Activated B cell treated with CpG ODN at 0.5 μM for 24 hours (primary cell): ENCODE measurements at regions of chr3 and their contacts with region 1.

Region 1: DNA sequence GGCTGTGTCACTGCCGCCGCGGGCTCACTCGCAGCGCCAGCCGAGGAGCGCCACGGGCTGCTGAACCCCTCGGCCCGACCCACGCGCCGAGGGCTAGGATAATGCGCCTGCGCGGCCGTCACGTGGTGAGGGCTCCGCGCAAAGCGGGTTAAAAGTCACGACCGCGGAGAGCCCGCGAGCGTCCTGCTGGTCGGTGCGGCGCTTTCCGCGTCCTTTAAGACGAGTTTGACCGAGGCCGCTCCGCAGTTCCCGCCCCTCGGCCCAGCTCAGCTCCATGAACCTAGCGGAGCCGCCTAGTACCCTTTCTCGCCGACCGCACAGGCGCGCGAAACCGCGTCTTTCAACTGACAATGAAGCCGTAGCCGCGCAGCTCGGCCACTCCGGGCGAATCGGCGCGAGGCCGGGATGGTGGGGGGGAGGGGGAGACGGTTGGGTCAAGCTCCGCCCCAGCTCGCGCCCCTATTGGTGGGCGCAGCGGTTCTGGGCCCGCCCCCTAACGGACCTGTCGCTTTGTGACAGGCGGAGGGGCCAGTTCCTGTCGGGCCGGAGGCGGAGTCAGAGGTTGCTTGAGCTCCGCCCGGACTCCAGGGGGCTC is 636 bp upstream of the STT3B start:
- DNase-seq: peak; percentile 97
- ATAC-seq: peak; percentile 84
- H3K4me3 Mint-ChIP-seq: peak overlapping the region; percentile 96
- H3K27ac Mint-ChIP-seq: peak overlapping the region; percentile 99
- H3K4me1 Mint-ChIP-seq: peaks cover 31% of the 10 kb centered on the region
- H3K27me3 Mint-ChIP-seq: no peaks in the 10 kb centered on the region
- CTCF ChIP-seq: no peak

Region 2: GRCh38 chr3:30658328-30659052 is 873.6 kb before region 1 on chr3:
- CTCF ChIA-PET with region 1: no interaction called
- POLR2A ChIA-PET with region 1: interaction called, 4 read pairs
- intact Hi-C with region 1: loop called (anchors 5 kb)
- DNase-seq: no peak
- ATAC-seq: peak; percentile 87
- H3K4me3 Mint-ChIP-seq: peak overlapping the region; percentile 12
- H3K27ac Mint-ChIP-seq: peak overlapping the region; percentile 82
- H3K4me1 Mint-ChIP-seq: peaks cover 94% of the 10 kb centered on the region
- H3K27me3 Mint-ChIP-seq: no peaks in the 10 kb centered on the region
- CTCF ChIP-seq: no peak

Region 3: DNA sequence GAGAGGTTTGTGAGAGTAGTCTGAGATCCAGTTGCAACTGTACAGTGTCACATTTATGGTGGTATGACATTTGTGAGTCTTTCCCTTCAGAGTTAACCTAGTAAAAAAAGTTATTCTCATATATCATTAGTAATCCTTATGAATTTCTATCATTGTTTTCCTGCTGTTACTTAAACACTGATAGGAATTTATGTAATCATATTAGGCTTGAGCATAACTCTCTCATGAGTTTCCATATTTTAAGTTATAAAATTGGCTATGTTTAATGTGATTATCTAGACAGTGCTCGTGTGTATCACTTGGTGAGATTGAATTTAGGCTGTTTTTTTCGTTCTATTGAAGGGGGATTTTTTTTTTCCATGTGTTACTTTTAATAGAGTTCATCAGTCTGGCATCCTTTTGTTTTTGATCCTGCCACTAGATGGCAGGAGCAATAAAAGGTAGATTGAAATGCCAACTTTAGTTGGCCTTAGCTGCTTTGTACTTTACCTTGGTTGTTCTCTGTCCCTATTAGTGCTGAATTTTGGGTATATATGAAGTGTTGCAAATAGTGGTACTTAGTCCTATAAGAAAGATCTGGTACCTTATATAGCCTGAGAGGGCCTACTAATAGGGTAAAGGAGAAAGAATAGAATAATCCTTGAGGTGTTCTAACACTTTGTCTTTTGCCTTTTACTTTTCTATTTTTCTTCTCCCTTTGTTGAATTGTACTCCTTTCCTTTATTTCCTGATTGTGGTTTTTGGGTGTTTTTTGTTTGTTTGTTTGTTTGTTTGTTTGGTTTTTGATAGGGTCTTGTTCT is 18.6 kb after region 1 on chr3:
- CTCF ChIA-PET with region 1: no interaction called
- POLR2A ChIA-PET with region 1: interaction called, 14 read pairs
- intact Hi-C with region 1: no loop called
- DNase-seq: no peak
- ATAC-seq: peak; percentile 49
- H3K4me3 Mint-ChIP-seq: no peak overlapping the region
- H3K27ac Mint-ChIP-seq: peak overlapping the region; percentile 13
- H3K4me1 Mint-ChIP-seq: peaks cover 63% of the 10 kb centered on the region
- H3K27me3 Mint-ChIP-seq: no peaks in the 10 kb centered on the region
- CTCF ChIP-seq: no peak

Region 4: GRCh38 chr3:31981206-31982181 is 449.4 kb after region 1 on chr3 and contains the starts of genes OSBPL10 and ZNF860:
- CTCF ChIA-PET with region 1: no interaction called
- POLR2A ChIA-PET with region 1: interaction called, 4 read pairs
- intact Hi-C with region 1: loop called (anchors 10 kb)
- DNase-seq: peak; percentile 63
- ATAC-seq: peak; percentile 62
- H3K4me3 Mint-ChIP-seq: peak within 1 kb of the TSS; percentile 97
- H3K27ac Mint-ChIP-seq: peak within 1 kb of the TSS; percentile 92
- H3K4me1 Mint-ChIP-seq: peaks cover 85% of the 10 kb centered on the region
- H3K27me3 Mint-ChIP-seq: no peaks in the 10 kb centered on the region
- CTCF ChIP-seq: no peak
- total RNA-seq, gene OSBPL10: 125 and 137 TPM in 2 replicates
- total RNA-seq, gene ZNF860: 16.6 and 19.1 TPM in 2 replicates

Region 5: DNA sequence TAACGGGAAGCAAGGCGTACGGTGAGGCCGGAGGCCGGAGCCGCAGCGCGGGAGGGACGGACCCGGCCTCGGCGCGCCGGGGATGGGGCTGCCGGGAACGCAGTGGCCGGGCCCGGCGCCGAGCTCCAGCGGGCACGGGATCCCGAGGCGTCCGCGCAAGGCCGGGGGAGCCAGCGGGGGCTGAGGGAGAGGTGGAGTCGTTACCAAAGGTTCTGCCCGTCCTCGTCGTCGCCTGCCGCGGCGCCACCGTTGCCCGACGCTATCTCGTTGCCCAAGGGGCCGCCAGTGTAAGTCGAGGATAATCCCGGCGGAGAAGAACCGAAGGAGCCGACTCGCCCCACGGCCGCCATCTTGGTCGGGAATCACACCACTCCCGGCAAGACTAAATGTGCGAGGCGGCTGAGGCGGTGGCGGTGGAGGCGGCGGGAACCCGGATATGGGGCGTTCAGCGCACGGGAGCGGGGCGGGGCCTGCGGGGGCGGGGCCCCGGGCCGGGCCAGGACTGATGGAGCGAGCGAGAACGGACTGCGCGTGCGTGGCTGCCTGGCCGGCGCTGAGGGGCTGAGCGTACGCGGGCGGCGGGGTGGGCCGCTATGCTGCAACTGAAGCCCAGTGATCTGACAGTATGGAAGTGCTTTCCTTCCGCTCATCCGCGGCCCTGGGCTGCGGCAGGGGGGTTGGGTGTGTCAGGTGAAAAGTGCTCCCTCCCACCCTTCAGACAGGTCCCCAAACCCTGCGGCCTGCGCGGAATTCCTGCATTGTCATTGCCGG is 1038.5 kb after region 1 on chr3 and contains the start of gene DYNC1LI1:
- CTCF ChIA-PET with region 1: no interaction called
- POLR2A ChIA-PET with region 1: interaction called, 5 read pairs
- intact Hi-C with region 1: loop called (anchors 1 kb)
- DNase-seq: peak; percentile 96
- ATAC-seq: peak; percentile 95
- H3K4me3 Mint-ChIP-seq: peak within 1 kb of the TSS; percentile 94
- H3K27ac Mint-ChIP-seq: peak within 1 kb of the TSS; percentile 93
- H3K4me1 Mint-ChIP-seq: peaks cover 32% of the 10 kb centered on the region
- H3K27me3 Mint-ChIP-seq: no peaks in the 10 kb centered on the region
- CTCF ChIP-seq: no peak
- total RNA-seq, gene DYNC1LI1: 32.6 and 38.8 TPM in 2 replicates

Region 6: GRCh38 chr3:33440323-33441232 is 1908.5 kb after region 1 on chr3 and contains the start of gene UBP1:
- CTCF ChIA-PET with region 1: no interaction called
- POLR2A ChIA-PET with region 1: interaction called, 7 read pairs
- intact Hi-C with region 1: loop called (anchors 1 kb)
- DNase-seq: peak; percentile 95
- ATAC-seq: peak; percentile 84
- H3K4me3 Mint-ChIP-seq: peak within 1 kb of the TSS; percentile 100
- H3K27ac Mint-ChIP-seq: peak within 1 kb of the TSS; percentile 100
- H3K4me1 Mint-ChIP-seq: peaks cover 48% of the 10 kb centered on the region
- H3K27me3 Mint-ChIP-seq: no peaks in the 10 kb centered on the region
- CTCF ChIP-seq: no peak
- total RNA-seq, gene UBP1: 50.1 and 68.6 TPM in 2 replicates